ENCODE measurements at regions of chr19 and their contacts with region 1.

Region 1: GRCh38 chr19:10717356-10718204 is at the start of gene DNM2:
- DNase-seq: peak; percentile 98
- ATAC-seq: peak; percentile 95
- H3K4me3 Mint-ChIP-seq: peak within 1 kb of the TSS; percentile 96
- H3K27ac Mint-ChIP-seq: peak within 1 kb of the TSS; percentile 88
- H3K4me1 Mint-ChIP-seq: peaks cover 32% of the 10 kb centered on the region
- H3K27me3 Mint-ChIP-seq: no peaks in the 10 kb centered on the region
- total RNA-seq, gene DNM2: 239 to 240 TPM

Region 2: DNA sequence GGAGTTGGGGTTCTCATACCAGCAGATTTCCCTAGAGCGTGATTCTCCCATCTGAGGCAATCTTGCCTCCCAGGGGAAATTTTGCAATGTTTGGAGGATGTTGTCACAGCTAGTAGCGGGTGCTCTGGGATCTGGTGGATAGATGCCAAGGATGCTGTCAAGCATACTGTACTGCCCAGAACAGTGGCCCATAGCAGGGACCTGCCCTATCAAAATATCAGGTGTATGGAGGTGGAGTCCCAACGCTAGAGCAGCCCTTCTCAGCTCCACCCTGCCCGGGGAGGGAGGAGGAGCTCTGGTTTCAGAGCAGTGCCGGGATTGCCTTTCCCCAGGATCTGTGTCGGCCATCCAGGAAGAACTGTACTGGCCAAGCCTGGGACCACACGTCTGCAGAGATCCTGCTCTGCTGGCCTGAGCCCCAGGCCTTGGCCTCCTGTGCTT is 27.2 kb before region 1 on chr19:
- CTCF ChIA-PET with region 1: no interaction called
- POLR2A ChIA-PET with region 1: no interaction called
- DNase-seq: no peak
- ATAC-seq: no peak
- H3K4me3 Mint-ChIP-seq: no peak overlapping the region
- H3K27ac Mint-ChIP-seq: no peak overlapping the region
- H3K4me1 Mint-ChIP-seq: peaks cover 9% of the 10 kb centered on the region
- H3K27me3 Mint-ChIP-seq: no peaks in the 10 kb centered on the region

Region 3: DNA sequence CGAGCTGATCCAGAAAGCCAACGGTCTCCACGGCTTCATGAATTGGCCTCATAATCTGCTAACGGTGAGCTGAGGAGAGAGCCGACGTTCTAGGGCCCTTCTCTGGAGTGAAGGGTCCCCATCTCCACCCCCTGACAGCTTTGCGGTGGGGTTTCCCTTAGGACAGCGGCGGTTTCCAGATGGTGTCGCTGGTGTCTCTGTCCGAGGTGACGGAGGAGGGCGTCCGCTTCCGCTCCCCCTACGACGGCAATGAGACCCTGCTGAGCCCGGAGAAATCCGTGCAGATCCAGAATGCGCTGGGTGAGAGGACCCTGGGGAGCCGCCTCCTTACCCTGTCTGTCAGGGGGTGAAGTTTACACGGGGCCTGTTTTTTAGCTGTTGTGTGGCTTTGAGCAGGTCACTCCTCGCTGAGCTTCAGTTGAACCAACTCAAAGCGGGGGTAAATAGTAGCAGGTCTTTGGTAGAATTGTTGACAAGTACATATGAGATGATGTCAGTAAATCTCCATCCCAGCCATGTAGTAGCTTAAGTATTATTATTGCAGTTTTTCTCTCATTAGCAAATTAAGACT is 15.5 kb before region 1 on chr19:
- CTCF ChIA-PET with region 1: interaction called, 60 read pairs
- POLR2A ChIA-PET with region 1: interaction called, 8 read pairs
- DNase-seq: peak; percentile 47
- ATAC-seq: peak; percentile 34
- H3K4me3 Mint-ChIP-seq: peak overlapping the region; percentile 80
- H3K27ac Mint-ChIP-seq: peak overlapping the region; percentile 74
- H3K4me1 Mint-ChIP-seq: peaks cover 12% of the 10 kb centered on the region
- H3K27me3 Mint-ChIP-seq: peaks cover 5% of the 10 kb centered on the region

Region 4: GRCh38 chr19:10769533-10770491 is 52.2 kb after region 1 on chr19:
- CTCF ChIA-PET with region 1: interaction called, 42 read pairs
- POLR2A ChIA-PET with region 1: interaction called, 5 read pairs
- DNase-seq: peak; percentile 31
- ATAC-seq: peak; percentile 36
- H3K4me3 Mint-ChIP-seq: no peak overlapping the region
- H3K27ac Mint-ChIP-seq: peak overlapping the region; percentile 71
- H3K4me1 Mint-ChIP-seq: peaks cover 28% of the 10 kb centered on the region
- H3K27me3 Mint-ChIP-seq: no peaks in the 10 kb centered on the region

Region 5: GRCh38 chr19:10820173-10820572 is 102.6 kb after region 1 on chr19:
- CTCF ChIA-PET with region 1: interaction called, 25 read pairs
- POLR2A ChIA-PET with region 1: interaction called, 5 read pairs
- DNase-seq: no peak
- ATAC-seq: no peak
- H3K4me3 Mint-ChIP-seq: no peak overlapping the region
- H3K27ac Mint-ChIP-seq: peak overlapping the region; percentile 46
- H3K4me1 Mint-ChIP-seq: peaks cover 29% of the 10 kb centered on the region
- H3K27me3 Mint-ChIP-seq: no peaks in the 10 kb centered on the region

Region 6: GRCh38 chr19:10835754-10836477 is 118.3 kb after region 1 on chr19 and contains the start of gene TMED1:
- CTCF ChIA-PET with region 1: interaction called, 27 read pairs
- POLR2A ChIA-PET with region 1: interaction called, 13 read pairs
- DNase-seq: peak; percentile 98
- ATAC-seq: peak; percentile 91
- H3K4me3 Mint-ChIP-seq: peak within 1 kb of the TSS; percentile 89
- H3K27ac Mint-ChIP-seq: peak within 1 kb of the TSS; percentile 99
- H3K4me1 Mint-ChIP-seq: peaks cover 17% of the 10 kb centered on the region
- H3K27me3 Mint-ChIP-seq: no peaks in the 10 kb centered on the region
- total RNA-seq, gene TMED1: 9.3 to 11.2 TPM

Region 7: DNA sequence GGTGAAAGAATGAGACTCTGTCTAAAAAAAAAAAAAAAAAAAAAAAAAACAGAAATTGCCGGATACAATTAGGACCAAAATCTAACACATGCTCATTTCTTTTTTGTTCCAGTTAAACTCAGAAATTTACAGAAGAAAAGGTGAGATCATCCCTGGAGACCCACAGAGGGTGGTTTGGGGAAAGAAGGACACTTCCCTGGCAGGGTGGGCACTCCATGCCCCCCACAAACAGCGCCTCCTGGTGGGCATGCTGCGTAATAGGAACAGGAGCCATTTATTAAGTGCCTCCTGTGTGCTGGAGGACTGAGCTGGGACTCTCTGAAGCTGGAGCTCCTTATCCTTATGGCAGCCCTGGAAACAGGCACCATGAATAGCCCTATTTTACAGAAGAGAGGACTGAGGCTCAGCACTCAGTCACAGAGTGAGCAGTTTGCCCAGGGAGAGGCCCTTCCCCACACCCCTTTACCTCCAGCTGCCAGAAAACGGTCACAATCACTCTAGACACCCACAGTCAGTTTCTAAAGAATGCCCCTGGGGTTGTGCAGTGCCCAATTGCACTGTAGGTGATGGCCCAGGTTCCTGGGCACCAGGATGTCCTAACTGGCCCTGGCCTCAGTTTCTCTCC is 140.7 kb after region 1 on chr19:
- CTCF ChIA-PET with region 1: interaction called, 195 read pairs
- POLR2A ChIA-PET with region 1: interaction called, 10 read pairs
- DNase-seq: peak; percentile 56
- ATAC-seq: no peak
- H3K4me3 Mint-ChIP-seq: no peak overlapping the region
- H3K27ac Mint-ChIP-seq: peak overlapping the region; percentile 18
- H3K4me1 Mint-ChIP-seq: peaks cover 7% of the 10 kb centered on the region
- H3K27me3 Mint-ChIP-seq: no peaks in the 10 kb centered on the region

Region 8: DNA sequence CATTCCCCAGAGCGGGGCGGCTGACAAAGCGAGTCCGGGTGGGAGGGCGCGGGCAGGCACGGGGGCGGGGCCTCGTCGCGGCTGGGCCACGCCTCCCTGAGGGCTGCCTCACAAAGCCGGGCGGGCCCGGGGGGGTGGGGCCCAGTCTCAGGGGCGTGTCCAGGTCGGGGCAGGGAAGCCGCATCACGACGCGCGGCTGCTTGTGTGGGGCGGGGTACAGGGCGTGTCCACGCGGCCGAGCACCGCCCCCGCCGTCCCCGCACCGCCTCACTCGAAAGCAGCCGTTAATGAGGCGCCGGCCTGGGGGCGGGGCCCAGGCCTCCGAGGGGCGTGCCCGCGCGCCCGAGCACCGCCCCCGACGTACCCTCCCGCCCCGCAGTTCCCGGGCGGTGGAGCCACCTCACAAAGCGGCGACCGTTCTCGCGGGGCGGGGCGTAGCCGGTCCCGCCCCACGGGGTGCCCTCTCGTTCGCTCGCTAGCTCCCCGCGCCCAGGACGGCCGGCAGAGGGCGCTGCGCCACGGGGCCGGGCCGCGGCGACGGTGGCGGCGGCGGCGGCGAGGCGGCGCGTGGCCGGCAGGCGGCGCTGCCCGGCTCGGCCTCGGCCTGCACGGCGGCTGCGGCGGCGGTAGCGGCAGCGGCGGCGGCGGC is 153.5 kb after region 1 on chr19 and contains the start of gene CARM1:
- CTCF ChIA-PET with region 1: interaction called, 195 read pairs
- POLR2A ChIA-PET with region 1: no interaction called
- DNase-seq: peak; percentile 99
- ATAC-seq: peak; percentile 91
- H3K4me3 Mint-ChIP-seq: peak within 1 kb of the TSS; percentile 67
- H3K27ac Mint-ChIP-seq: peak within 1 kb of the TSS; percentile 79
- H3K4me1 Mint-ChIP-seq: peaks cover 28% of the 10 kb centered on the region
- H3K27me3 Mint-ChIP-seq: no peaks in the 10 kb centered on the region
- total RNA-seq, gene CARM1: 33.2 to 33.4 TPM

Measured in activated CD8-positive, alpha-beta T cell treated with anti-CD3 and anti-CD28 coated beads, Interleukin-2, amount 10 ng/mL, durations not matched to agents 7 days and 5 days (primary cell).